Activated T-helper 1 cell treated with anti-CD3 and anti-CD28 coated beads, Interleukin-12 subunit alpha, Interleukin-12 subunit beta, Interleukin-2, Interleukin-4 antibody, amounts not matched to agents 30 ng/mL and 10 ng/mL and 1 ng/mL, durations not matched to agents 14 hours and 24 hours and 36 hours (primary cell): ENCODE measurements at regions of chr18 and their contacts with region 1.

Region 1: GRCh38 chr18:74551936-74552555 is 17.7 kb downstream of the CNDP1 start:
- DNase-seq: peak; percentile 60
- H3K4me3 Mint-ChIP-seq: no peak overlapping the region
- H3K27ac Mint-ChIP-seq: no peak overlapping the region
- H3K4me1 Mint-ChIP-seq: peaks cover 6% of the 10 kb centered on the region
- H3K27me3 Mint-ChIP-seq: peaks cover 13% of the 10 kb centered on the region

Region 2: DNA sequence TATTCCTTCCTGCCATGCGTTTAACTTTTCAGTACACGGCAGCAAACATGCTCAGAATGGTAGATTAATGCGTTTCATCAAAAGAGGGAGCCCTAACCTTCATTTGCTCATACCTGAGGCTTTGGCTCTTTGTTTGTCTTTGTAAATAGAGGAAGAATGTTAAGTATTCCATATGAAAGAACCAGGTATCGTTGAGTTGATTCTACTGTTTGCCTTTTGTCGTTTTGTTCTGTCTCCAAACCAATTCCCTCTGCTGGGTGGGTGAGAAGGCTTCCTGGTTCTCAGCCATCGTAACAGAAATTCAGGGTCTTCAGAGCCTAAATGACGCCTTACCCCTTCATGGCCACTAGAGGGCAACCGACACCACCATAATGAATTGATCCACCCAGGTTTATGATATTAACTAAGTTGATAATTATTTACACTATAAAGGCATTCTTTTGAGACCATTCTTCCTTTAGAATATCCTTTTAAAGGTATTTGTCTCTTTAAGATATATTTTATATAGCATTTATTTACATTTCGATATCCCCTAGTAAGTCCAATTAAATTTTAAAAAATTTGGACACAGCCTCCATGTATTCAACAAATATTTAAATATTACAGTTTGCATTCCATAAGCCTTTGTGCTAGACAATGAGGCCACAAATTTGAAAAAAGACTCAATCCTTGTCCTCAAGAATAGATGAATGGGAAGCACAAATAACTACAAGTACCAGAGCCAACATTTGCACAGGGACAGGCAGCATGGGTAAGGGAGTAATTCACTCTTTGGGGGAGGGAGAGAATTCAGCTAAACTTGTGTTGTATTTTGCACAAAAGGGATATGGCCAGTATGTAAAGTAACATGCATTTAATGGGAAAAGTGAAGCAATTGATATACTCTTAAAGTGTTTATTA is 355.6 kb before region 1 on chr18:
- intact Hi-C with region 1: loop called (anchors 1 kb)
- DNase-seq: peak; percentile 17
- H3K4me3 Mint-ChIP-seq: peak overlapping the region; percentile 68
- H3K27ac Mint-ChIP-seq: no peak overlapping the region
- H3K4me1 Mint-ChIP-seq: peaks cover 7% of the 10 kb centered on the region
- H3K27me3 Mint-ChIP-seq: peaks cover 5% of the 10 kb centered on the region

Region 3: GRCh38 chr18:74353169-74353775 is 198.8 kb before region 1 on chr18:
- intact Hi-C with region 1: loop called (anchors 1 kb)
- DNase-seq: peak; percentile 22
- H3K4me3 Mint-ChIP-seq: no peak overlapping the region
- H3K27ac Mint-ChIP-seq: no peak overlapping the region
- H3K4me1 Mint-ChIP-seq: peaks cover 23% of the 10 kb centered on the region
- H3K27me3 Mint-ChIP-seq: peaks cover 18% of the 10 kb centered on the region